ENCODE measurements at regions of chr12 and their contacts with region 1.

Region 1: GRCh38 chr12:47779301-47779942 is 6.4 kb downstream of the SLC48A1 start:
- DNase-seq: peak; percentile 91
- H3K4me3 ChIP-seq: no peak overlapping the region
- H3K27ac ChIP-seq: no peak overlapping the region
- H3K4me1 ChIP-seq: peaks cover 35% of the 10 kb centered on the region
- H3K27me3 ChIP-seq: no peaks in the 10 kb centered on the region
- CTCF ChIP-seq: peak; percentile 96

Region 2: GRCh38 chr12:47651368-47652254 is 127.8 kb before region 1 on chr12:
- CTCF ChIA-PET with region 1: no interaction called
- POLR2A ChIA-PET with region 1: no interaction called
- intact Hi-C with region 1: loop called (anchors 5 kb)
- DNase-seq: peak; percentile 87
- H3K4me3 ChIP-seq: no peak overlapping the region
- H3K27ac ChIP-seq: peak overlapping the region; percentile 40
- H3K4me1 ChIP-seq: peaks cover 12% of the 10 kb centered on the region
- H3K27me3 ChIP-seq: no peaks in the 10 kb centered on the region
- CTCF ChIP-seq: peak; percentile 75

Region 3: DNA sequence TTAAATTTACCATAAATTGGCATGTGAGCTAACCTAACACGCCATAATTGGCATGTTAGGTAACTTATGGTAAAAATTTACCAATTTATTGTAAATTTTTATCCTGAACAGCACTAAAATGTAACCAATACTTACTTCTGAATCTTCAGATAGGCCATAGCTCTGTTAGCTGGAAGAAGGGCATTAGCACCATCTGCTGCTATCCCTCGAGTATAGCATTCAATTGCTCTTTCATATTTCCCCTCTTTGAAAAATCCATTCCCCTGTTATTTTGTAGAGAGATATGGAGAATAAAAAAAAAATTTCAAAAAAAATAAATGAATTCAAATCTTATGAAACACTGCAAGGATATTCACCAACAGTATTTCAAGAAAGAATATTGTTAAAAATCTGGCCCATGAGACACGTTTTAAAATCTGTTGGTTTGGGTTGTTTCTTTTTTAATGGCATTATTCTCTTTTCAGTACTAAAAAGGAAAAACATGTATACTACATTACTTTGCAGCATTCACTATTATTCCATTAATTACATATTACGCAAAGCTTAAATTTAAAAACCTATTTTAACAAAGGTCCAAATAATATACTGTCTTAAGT is 92.7 kb before region 1 on chr12:
- CTCF ChIA-PET with region 1: no interaction called
- POLR2A ChIA-PET with region 1: no interaction called
- intact Hi-C with region 1: no loop called
- DNase-seq: peak; percentile 52
- H3K4me3 ChIP-seq: no peak overlapping the region
- H3K27ac ChIP-seq: no peak overlapping the region
- H3K4me1 ChIP-seq: no peaks in the 10 kb centered on the region
- H3K27me3 ChIP-seq: no peaks in the 10 kb centered on the region
- CTCF ChIP-seq: peak; percentile 76

Region 4: DNA sequence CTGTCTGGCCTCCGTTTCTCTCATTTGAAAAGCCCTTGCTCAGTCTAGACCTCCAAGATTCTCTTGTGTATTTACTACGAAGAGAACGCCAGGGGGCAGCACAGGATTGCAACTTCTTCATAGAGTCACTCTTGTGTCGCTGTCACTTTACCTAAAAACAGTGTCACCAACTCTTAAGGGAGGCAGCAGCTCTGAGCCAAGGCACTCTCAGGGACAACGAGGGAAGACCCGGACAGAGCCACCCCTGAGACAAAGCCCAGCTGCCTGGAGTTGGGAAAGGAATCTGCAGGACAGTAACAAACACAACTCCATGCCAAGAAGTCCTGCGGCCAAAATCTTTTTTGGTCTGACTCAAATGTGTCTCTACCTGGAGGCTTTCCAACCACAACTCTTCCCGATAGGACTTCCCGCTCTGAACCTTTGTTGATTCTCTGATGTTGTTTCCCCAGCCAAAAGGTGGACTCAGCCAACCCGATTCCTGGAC is 64.0 kb before region 1 on chr12:
- CTCF ChIA-PET with region 1: interaction called, 5 read pairs
- POLR2A ChIA-PET with region 1: no interaction called
- intact Hi-C with region 1: loop called (anchors 1 kb)
- DNase-seq: peak; percentile 89
- H3K4me3 ChIP-seq: no peak overlapping the region
- H3K27ac ChIP-seq: no peak overlapping the region
- H3K4me1 ChIP-seq: peaks cover 11% of the 10 kb centered on the region
- H3K27me3 ChIP-seq: no peaks in the 10 kb centered on the region
- CTCF ChIP-seq: peak; percentile 81

Region 5: GRCh38 chr12:47742253-47742825 is 37.1 kb before region 1 on chr12:
- CTCF ChIA-PET with region 1: interaction called, 3 read pairs
- POLR2A ChIA-PET with region 1: no interaction called
- intact Hi-C with region 1: loop called (anchors 5 kb)
- DNase-seq: no peak
- H3K4me3 ChIP-seq: no peak overlapping the region
- H3K27ac ChIP-seq: no peak overlapping the region
- H3K4me1 ChIP-seq: peaks cover 39% of the 10 kb centered on the region
- H3K27me3 ChIP-seq: no peaks in the 10 kb centered on the region
- CTCF ChIP-seq: peak; percentile 98

Region 6: GRCh38 chr12:47882781-47883546 is 103.5 kb after region 1 on chr12:
- CTCF ChIA-PET with region 1: no interaction called
- POLR2A ChIA-PET with region 1: no interaction called
- intact Hi-C with region 1: no loop called
- DNase-seq: no peak
- H3K4me3 ChIP-seq: no peak overlapping the region
- H3K27ac ChIP-seq: no peak overlapping the region
- H3K4me1 ChIP-seq: no peaks in the 10 kb centered on the region
- H3K27me3 ChIP-seq: no peaks in the 10 kb centered on the region
- CTCF ChIP-seq: no peak

Region 7: GRCh38 chr12:47920913-47921312 is 141.5 kb after region 1 on chr12:
- CTCF ChIA-PET with region 1: no interaction called
- POLR2A ChIA-PET with region 1: no interaction called
- intact Hi-C with region 1: no loop called
- DNase-seq: no peak
- H3K4me3 ChIP-seq: no peak overlapping the region
- H3K27ac ChIP-seq: no peak overlapping the region
- H3K4me1 ChIP-seq: no peaks in the 10 kb centered on the region
- H3K27me3 ChIP-seq: peaks cover 19% of the 10 kb centered on the region
- CTCF ChIP-seq: no peak